Endothelial cell of umbilical vein (primary cell): ENCODE measurements at regions of chr6 and their contacts with region 1.

Region 1: GRCh38 chr6:90285611-90286381 is 10.8 kb downstream of the BACH2 start:
- DNase-seq: peak; percentile 90
- H3K4me3 ChIP-seq: peak overlapping the region in 1 of 3 experiments; percentile 64
- H3K27ac ChIP-seq: peak overlapping the region; percentile 99
- H3K4me1 ChIP-seq: peaks cover 22% of the 10 kb centered on the region
- H3K27me3 ChIP-seq: no peaks in the 10 kb centered on the region
- CTCF ChIP-seq: no peak
- POLR2A ChIP-seq: no peak

Region 2: GRCh38 chr6:89297695-89298351 is 988.0 kb before region 1 on chr6:
- CTCF ChIA-PET with region 1: no interaction called
- POLR2A ChIA-PET with region 1: interaction called, 3 read pairs
- dilution Hi-C with region 1: no loop called
- intact Hi-C with region 1: loop called (anchors 1 kb)
- DNase-seq: peak; percentile 97
- H3K4me3 ChIP-seq: peak overlapping the region in 1 of 3 experiments; percentile 47
- H3K27ac ChIP-seq: peak overlapping the region; percentile 84
- H3K4me1 ChIP-seq: peaks cover 28% of the 10 kb centered on the region
- H3K27me3 ChIP-seq: no peaks in the 10 kb centered on the region
- CTCF ChIP-seq: no peak
- POLR2A ChIP-seq: no peak

Region 3: DNA sequence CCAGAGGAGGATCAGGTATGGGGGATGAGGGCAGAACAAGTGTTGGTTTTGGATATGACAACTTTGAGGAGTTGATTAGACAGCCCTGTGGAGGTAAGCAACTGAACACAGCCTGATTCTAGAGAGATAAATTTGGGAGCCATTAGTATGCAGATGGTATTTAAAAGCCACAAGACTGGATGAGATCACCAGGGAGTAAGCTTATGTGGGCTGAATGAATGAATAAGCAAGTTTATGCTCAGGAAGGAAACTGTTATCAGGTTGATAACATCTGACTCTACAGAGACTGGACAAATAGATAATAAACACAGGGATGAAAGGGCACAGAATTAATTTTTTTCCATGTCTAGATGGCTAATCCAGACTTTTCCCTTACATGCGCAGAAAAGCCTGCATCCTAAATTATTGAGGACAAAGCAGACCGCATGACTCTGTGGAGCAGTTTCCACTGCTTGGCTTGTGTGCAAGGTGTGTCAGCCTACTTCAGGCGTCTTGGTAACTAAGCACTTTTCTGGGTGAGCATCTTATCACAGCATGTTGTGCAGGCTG is 240.9 kb before region 1 on chr6:
- CTCF ChIA-PET with region 1: interaction called, 3 read pairs
- POLR2A ChIA-PET with region 1: no interaction called
- dilution Hi-C with region 1: no loop called
- intact Hi-C with region 1: loop called (anchors 1 kb)
- DNase-seq: peak; percentile 76
- H3K4me3 ChIP-seq: no peak overlapping the region
- H3K27ac ChIP-seq: peak overlapping the region; percentile 62
- H3K4me1 ChIP-seq: peaks cover 16% of the 10 kb centered on the region
- H3K27me3 ChIP-seq: no peaks in the 10 kb centered on the region
- CTCF ChIP-seq: no peak
- POLR2A ChIP-seq: no peak

Region 4: GRCh38 chr6:90184334-90185298 is 101.2 kb before region 1 on chr6:
- CTCF ChIA-PET with region 1: interaction called, 4 read pairs
- POLR2A ChIA-PET with region 1: interaction called, 3 read pairs
- dilution Hi-C with region 1: no loop called
- intact Hi-C with region 1: loop called (anchors 1 kb)
- DNase-seq: peak; percentile 92
- H3K4me3 ChIP-seq: no peak overlapping the region
- H3K27ac ChIP-seq: no peak overlapping the region
- H3K4me1 ChIP-seq: peaks cover 10% of the 10 kb centered on the region
- H3K27me3 ChIP-seq: no peaks in the 10 kb centered on the region
- CTCF ChIP-seq: no peak
- POLR2A ChIP-seq: no peak

Region 5: GRCh38 chr6:90296346-90297114 is 10.7 kb after region 1 on chr6 and contains the start of gene BACH2:
- CTCF ChIA-PET with region 1: interaction called, 14 read pairs
- POLR2A ChIA-PET with region 1: interaction called, 3 read pairs
- dilution Hi-C with region 1: no loop called
- intact Hi-C with region 1: loop called (anchors 1 kb)
- DNase-seq: peak; percentile 78
- H3K4me3 ChIP-seq: peak within 1 kb of the TSS; percentile 34 to 83 (median 57)
- H3K27ac ChIP-seq: no peak within 1 kb of the TSS
- H3K4me1 ChIP-seq: peaks cover 6% of the 10 kb centered on the region
- H3K27me3 ChIP-seq: peaks cover 12 to 38% of the 10 kb centered on the region in 2 experiments
- CTCF ChIP-seq: peak in 1 of 2 donors; percentile 30
- POLR2A ChIP-seq: no peak
- total RNA-seq, gene BACH2: 5.6 and 5.9 TPM in 2 replicates

Region 6: DNA sequence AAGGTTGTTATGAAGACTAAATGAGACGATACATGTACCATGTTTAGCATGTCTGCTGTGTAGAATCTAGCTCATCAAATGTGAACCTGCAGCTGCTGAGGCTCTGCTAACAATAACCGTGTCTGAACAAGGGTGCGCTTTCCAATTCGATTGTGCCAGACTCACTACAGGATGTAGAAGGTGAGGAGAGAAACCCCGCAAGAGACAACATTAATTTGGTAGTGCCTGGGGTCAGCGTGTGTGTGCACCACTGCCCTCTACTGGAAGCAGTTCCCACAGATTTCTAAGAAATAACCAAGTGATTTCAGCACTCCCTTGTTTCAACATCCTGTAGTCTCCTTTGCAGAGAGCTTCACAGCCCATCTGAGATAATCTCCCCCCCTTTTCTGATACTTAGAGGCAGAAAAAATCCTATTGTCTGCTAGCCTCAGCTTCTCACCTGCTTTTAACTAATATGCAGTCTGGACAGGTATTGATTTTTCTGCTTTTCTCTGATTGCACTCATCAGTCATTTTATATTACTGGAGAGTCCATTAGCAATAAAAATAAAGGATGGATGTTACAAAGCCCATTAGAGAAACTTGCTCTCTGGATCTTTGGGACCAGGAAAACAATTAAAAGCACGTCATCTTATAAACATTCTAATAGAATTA is 107.6 kb after region 1 on chr6:
- CTCF ChIA-PET with region 1: interaction called, 48 read pairs
- POLR2A ChIA-PET with region 1: no interaction called
- dilution Hi-C with region 1: no loop called
- intact Hi-C with region 1: loop called (anchors 1 kb)
- DNase-seq: peak; percentile 65
- H3K4me3 ChIP-seq: no peak overlapping the region
- H3K27ac ChIP-seq: no peak overlapping the region
- H3K4me1 ChIP-seq: peaks cover 5% of the 10 kb centered on the region
- H3K27me3 ChIP-seq: peaks cover 7 to 17% of the 10 kb centered on the region in 2 experiments
- CTCF ChIP-seq: peak; percentile 67 to 69
- POLR2A ChIP-seq: no peak

Region 7: DNA sequence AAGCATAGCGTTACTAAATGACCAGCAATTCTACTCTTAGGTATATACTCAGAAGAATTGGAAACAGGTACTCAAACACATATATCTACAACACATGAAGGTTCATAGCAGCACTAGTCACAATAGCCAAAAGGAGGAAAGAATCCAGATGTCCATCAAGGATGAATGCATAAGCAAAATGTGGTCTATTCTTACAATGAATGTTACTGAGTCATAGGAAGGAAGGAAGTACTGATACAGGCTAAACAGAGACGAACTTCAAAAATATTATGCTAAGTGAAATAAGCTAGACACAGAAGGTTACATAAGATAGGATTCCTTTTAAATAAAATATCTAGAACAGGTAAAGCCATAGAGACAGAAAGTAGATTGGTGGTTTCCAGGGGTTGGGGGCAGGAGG is 207.5 kb after region 1 on chr6:
- CTCF ChIA-PET with region 1: interaction called, 3 read pairs
- POLR2A ChIA-PET with region 1: no interaction called
- dilution Hi-C with region 1: no loop called
- intact Hi-C with region 1: loop called (anchors 5 kb)
- DNase-seq: peak; percentile 91
- H3K4me3 ChIP-seq: no peak overlapping the region
- H3K27ac ChIP-seq: peak overlapping the region; percentile 66
- H3K4me1 ChIP-seq: peaks cover 36% of the 10 kb centered on the region
- H3K27me3 ChIP-seq: no peaks in the 10 kb centered on the region
- CTCF ChIP-seq: no peak
- POLR2A ChIP-seq: peak; percentile 46